PC-9 (cell line): ENCODE measurements at regions of chrX and their contacts with region 1.

Region 1: GRCh38 chrX:107205770-107206696 is at the starts of genes DNAAF6 and NUP62CL:
- DNase-seq: peak; percentile 88
- H3K4me3 ChIP-seq: peak within 1 kb of the TSS; percentile 74
- H3K27ac ChIP-seq: no peak within 1 kb of the TSS; the same call in 1 of the 2 replicates
- H3K4me1 ChIP-seq: peaks cover 13% of the 10 kb centered on the region; the same call in 1 of the 2 replicates
- H3K27me3 ChIP-seq: no peaks in the 10 kb centered on the region
- CTCF ChIP-seq: no peak
- total RNA-seq, gene DNAAF6: not detected in 2 replicates
- total RNA-seq, gene NUP62CL: 20.2 and 20.9 TPM in 2 replicates

Region 2: GRCh38 chrX:106780664-106781377 is 425.2 kb before region 1 on chrX:
- CTCF ChIA-PET with region 1: no interaction called
- POLR2A ChIA-PET with region 1: no interaction called
- intact Hi-C with region 1: no loop called
- DNase-seq: no peak
- H3K4me3 ChIP-seq: no peak overlapping the region
- H3K27ac ChIP-seq: no peak overlapping the region
- H3K4me1 ChIP-seq: no peaks in the 10 kb centered on the region
- H3K27me3 ChIP-seq: no peaks in the 10 kb centered on the region
- CTCF ChIP-seq: no peak

Region 3: GRCh38 chrX:106999002-106999975 is 206.7 kb before region 1 on chrX:
- CTCF ChIA-PET with region 1: no interaction called
- POLR2A ChIA-PET with region 1: no interaction called
- intact Hi-C with region 1: loop called (anchors 2 kb)
- DNase-seq: peak; percentile 47 to 48
- H3K4me3 ChIP-seq: peak overlapping the region; percentile 75
- H3K27ac ChIP-seq: no peak overlapping the region
- H3K4me1 ChIP-seq: 0 out of 2 replicates have a peak, but pooled peaks cover 6% of the 10 kb centered on the region
- H3K27me3 ChIP-seq: no peaks in the 10 kb centered on the region
- CTCF ChIP-seq: peak; percentile 66

Region 4: GRCh38 chrX:107102975-107103374 is 103.1 kb before region 1 on chrX:
- CTCF ChIA-PET with region 1: interaction called, 10 read pairs
- POLR2A ChIA-PET with region 1: no interaction called
- intact Hi-C with region 1: no loop called
- DNase-seq: no peak
- H3K4me3 ChIP-seq: no peak overlapping the region
- H3K27ac ChIP-seq: no peak overlapping the region
- H3K4me1 ChIP-seq: no peaks in the 10 kb centered on the region
- H3K27me3 ChIP-seq: no peaks in the 10 kb centered on the region
- CTCF ChIP-seq: peak; percentile 64

Region 5: GRCh38 chrX:107118322-107119147 is 87.5 kb before region 1 on chrX and contains the start of gene RBM41:
- CTCF ChIA-PET with region 1: no interaction called
- POLR2A ChIA-PET with region 1: no interaction called
- intact Hi-C with region 1: loop called (anchors 5 kb)
- DNase-seq: peak; percentile 72 to 81
- H3K4me3 ChIP-seq: peak within 1 kb of the TSS; percentile 84
- H3K27ac ChIP-seq: no peak within 1 kb of the TSS
- H3K4me1 ChIP-seq: peaks cover 18% of the 10 kb centered on the region
- H3K27me3 ChIP-seq: no peaks in the 10 kb centered on the region
- CTCF ChIP-seq: no peak
- total RNA-seq, gene RBM41: 31.2 and 31.5 TPM in 2 replicates

Region 6: GRCh38 chrX:107227780-107228485 is 21.9 kb after region 1 on chrX:
- CTCF ChIA-PET with region 1: no interaction called
- POLR2A ChIA-PET with region 1: no interaction called
- intact Hi-C with region 1: no loop called
- DNase-seq: no peak
- H3K4me3 ChIP-seq: no peak overlapping the region
- H3K27ac ChIP-seq: no peak overlapping the region
- H3K4me1 ChIP-seq: peaks cover 5% of the 10 kb centered on the region; the same call in 1 of the 2 replicates
- H3K27me3 ChIP-seq: no peaks in the 10 kb centered on the region
- CTCF ChIP-seq: no peak